Natural killer cell (primary cell): ENCODE measurements at regions of chr15 and their contacts with region 1.

Region 1: GRCh38 chr15:72783563-72784237 is at the start of gene ADPGK:
- DNase-seq: peak; percentile 98 to 99
- ATAC-seq: peak; percentile 79 to 94 (median 82)
- H3K4me3 ChIP-seq: peak within 1 kb of the TSS; percentile 72
- H3K4me3 Mint-ChIP-seq: peak within 1 kb of the TSS; percentile 92
- H3K27ac ChIP-seq: peak within 1 kb of the TSS; percentile 92
- H3K27ac Mint-ChIP-seq: peak within 1 kb of the TSS; percentile 85 to 93
- H3K4me1 ChIP-seq: peaks cover 40% of the 10 kb centered on the region
- H3K4me1 Mint-ChIP-seq: peaks cover 59 to 75% of the 10 kb centered on the region in 2 donors
- H3K27me3 ChIP-seq: no peaks in the 10 kb centered on the region
- H3K27me3 Mint-ChIP-seq: no peaks in the 10 kb centered on the region
- CTCF ChIP-seq: no peak
- total RNA-seq, gene ADPGK: 99.8 to 113 (median 101) TPM

Region 2: GRCh38 chr15:72117486-72118399 is 666.0 kb before region 1 on chr15 and contains the start of gene MYO9A:
- intact Hi-C with region 1: loop called (anchors 5 kb)
- DNase-seq: peak; percentile 93 to 99
- ATAC-seq: peak; percentile 80 to 94 (median 81)
- H3K4me3 ChIP-seq: peak within 1 kb of the TSS; percentile 80
- H3K4me3 Mint-ChIP-seq: peak within 1 kb of the TSS; percentile 96
- H3K27ac ChIP-seq: peak within 1 kb of the TSS; percentile 83
- H3K27ac Mint-ChIP-seq: peak within 1 kb of the TSS; percentile 93 to 96
- H3K4me1 ChIP-seq: peaks cover 14% of the 10 kb centered on the region
- H3K4me1 Mint-ChIP-seq: peaks cover 26 to 32% of the 10 kb centered on the region in 2 donors
- H3K27me3 ChIP-seq: no peaks in the 10 kb centered on the region
- H3K27me3 Mint-ChIP-seq: no peaks in the 10 kb centered on the region
- CTCF ChIP-seq: no peak
- total RNA-seq, gene MYO9A: 36.3 to 40.4 (median 37.3) TPM

Region 3: GRCh38 chr15:72375847-72376581 is 407.7 kb before region 1 on chr15 and contains the start of gene HEXA:
- intact Hi-C with region 1: loop called (anchors 10 kb)
- DNase-seq: peak; percentile 96 to 99
- ATAC-seq: peak; percentile 77 to 92 (median 86)
- H3K4me3 ChIP-seq: peak within 1 kb of the TSS; percentile 90
- H3K4me3 Mint-ChIP-seq: peak within 1 kb of the TSS; percentile 98
- H3K27ac ChIP-seq: peak within 1 kb of the TSS; percentile 86
- H3K27ac Mint-ChIP-seq: peak within 1 kb of the TSS; percentile 96 to 99
- H3K4me1 ChIP-seq: peaks cover 25% of the 10 kb centered on the region
- H3K4me1 Mint-ChIP-seq: peaks cover 35 to 43% of the 10 kb centered on the region in 2 donors
- H3K27me3 ChIP-seq: no peaks in the 10 kb centered on the region
- H3K27me3 Mint-ChIP-seq: no peaks in the 10 kb centered on the region
- CTCF ChIP-seq: no peak
- total RNA-seq, gene HEXA: 154 to 173 (median 172) TPM

Region 4: DNA sequence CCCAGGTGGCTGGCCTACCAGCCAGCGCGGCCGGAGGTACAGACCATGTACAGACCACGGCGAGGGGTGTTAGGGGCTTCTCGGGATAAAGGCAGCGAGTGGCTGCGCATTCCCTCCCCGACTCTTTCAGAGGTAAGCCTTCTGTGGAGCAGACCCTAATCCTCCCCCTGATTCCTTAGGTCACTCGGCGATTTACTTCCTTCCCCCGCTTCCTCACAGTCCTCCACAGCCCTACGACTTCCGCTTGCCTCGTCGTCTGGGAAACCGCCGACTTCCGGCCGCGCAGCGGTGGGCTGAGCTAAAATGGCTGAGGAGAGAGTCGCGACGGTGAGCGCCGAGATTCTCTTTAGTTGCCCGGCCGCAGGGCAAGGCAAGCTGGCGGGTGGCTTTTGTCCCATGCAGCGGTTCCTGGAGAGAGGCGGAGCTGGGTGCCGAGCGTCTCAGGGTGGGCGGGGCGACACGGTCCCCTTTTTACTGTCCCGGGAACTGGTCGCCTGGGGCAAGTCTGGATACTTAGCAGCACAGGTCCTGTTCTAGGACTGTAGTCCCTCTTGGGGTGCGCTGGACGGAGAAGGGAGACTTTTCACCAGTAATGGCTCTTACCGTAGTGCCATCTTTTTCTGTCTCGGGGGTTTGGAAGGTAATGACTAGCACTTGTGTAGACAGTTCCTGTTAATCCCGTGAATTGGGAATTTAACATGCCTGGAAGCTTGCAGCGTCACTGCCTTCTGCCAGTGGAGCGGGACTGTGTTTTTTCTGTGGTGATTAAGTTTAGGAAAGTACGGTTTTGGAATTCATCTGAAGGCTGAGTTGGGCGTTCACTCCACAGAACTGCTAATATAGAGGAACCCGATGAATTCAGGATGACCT is 97.5 kb before region 1 on chr15 and contains the starts of genes BBS4 and HIGD2B:
- intact Hi-C with region 1: loop called (anchors 5 kb)
- DNase-seq: peak; percentile 82 to 92
- ATAC-seq: peak; percentile 95 to 97 (median 95)
- H3K4me3 ChIP-seq: peak within 1 kb of the TSS; percentile 94
- H3K4me3 Mint-ChIP-seq: peak within 1 kb of the TSS; percentile 98
- H3K27ac ChIP-seq: peak within 1 kb of the TSS; percentile 95
- H3K27ac Mint-ChIP-seq: peak within 1 kb of the TSS; percentile 95 to 96
- H3K4me1 ChIP-seq: peaks cover 17% of the 10 kb centered on the region
- H3K4me1 Mint-ChIP-seq: peaks cover 17 to 19% of the 10 kb centered on the region in 2 donors
- H3K27me3 ChIP-seq: no peaks in the 10 kb centered on the region
- H3K27me3 Mint-ChIP-seq: no peaks in the 10 kb centered on the region
- CTCF ChIP-seq: no peak
- total RNA-seq, gene BBS4: 24.7 to 37.2 (median 26.7) TPM
- total RNA-seq, gene HIGD2B: 0.88 to 1.8 (median 1.1) TPM

Region 5: DNA sequence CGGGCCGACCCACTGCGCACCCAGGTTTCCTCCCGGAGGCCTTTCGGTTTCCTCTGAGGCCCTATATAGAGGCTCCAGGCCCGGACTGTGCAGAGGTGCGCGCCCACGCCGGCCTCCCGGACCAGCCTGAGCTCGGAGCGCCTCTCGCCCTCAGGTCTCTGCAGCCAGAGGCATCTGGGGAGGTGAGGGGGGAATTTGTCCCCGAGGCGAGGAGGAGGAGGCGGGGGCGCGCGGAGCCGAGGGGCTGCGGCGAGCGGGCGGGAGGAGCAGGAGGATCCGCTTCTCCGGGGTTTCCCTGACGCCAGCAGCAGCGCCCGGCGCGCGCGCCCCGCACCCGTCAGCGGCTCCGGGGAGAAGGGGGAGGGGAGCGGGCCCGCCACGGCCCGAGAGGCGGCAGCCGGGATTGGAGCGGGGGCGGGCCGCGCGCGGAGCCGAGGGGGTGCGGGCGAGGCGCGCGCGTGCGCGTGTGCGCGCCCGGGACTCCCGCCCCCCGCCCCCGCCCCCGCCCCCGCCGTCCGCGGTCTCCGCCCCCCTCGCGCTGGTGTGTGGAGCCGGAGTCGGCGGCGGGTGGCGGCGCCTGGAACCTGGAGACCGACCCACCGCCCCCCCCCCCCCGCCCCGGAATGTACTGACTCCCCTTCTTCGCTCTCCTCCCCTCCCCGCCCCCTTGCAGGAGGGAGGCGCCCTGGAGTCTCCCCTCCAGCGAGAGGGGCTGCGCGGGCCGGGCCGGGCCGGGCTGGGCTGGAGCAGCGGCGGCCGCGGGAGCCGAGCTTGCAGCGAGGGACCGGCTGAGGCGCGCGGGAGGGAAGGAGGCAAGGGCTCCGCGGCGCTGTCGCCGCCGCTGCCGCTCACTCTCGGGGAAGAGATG is 268.3 kb after region 1 on chr15 and contains the start of gene NEO1:
- intact Hi-C with region 1: loop called (anchors 10 kb)
- DNase-seq: peak; percentile 76 to 89
- ATAC-seq: peak; percentile 77 to 89 (median 81)
- H3K4me3 ChIP-seq: peak within 1 kb of the TSS; percentile 82
- H3K4me3 Mint-ChIP-seq: peak within 1 kb of the TSS; percentile 85
- H3K27ac ChIP-seq: peak within 1 kb of the TSS; percentile 53
- H3K27ac Mint-ChIP-seq: peak within 1 kb of the TSS in 1 of 2 donors; percentile 75
- H3K4me1 ChIP-seq: peaks cover 11% of the 10 kb centered on the region
- H3K4me1 Mint-ChIP-seq: peaks cover 5 to 7% of the 10 kb centered on the region in 2 donors
- H3K27me3 ChIP-seq: peaks cover 23% of the 10 kb centered on the region
- H3K27me3 Mint-ChIP-seq: peaks cover 9 to 21% of the 10 kb centered on the region in 2 donors
- CTCF ChIP-seq: no peak
- total RNA-seq, gene NEO1: 16.3 to 19.0 (median 17.4) TPM